ENCODE measurements at regions of chr4 and their contacts with region 1.

Region 1: GRCh38 chr4:153573881-153574802 is 108.0 kb downstream of the TMEM131L start:
- DNase-seq: peak; percentile 54 to 76
- ATAC-seq: peak; percentile 79 to 83
- H3K4me3 ChIP-seq: no peak overlapping the region
- H3K27ac ChIP-seq: peak overlapping the region; percentile 83 to 94 (median 86)
- H3K4me1 ChIP-seq: peaks cover 43 to 53% of the 10 kb centered on the region in 2 donors
- H3K27me3 ChIP-seq: no peaks in the 10 kb centered on the region
- CTCF ChIP-seq: peak; percentile 61 to 74 (median 68)
- POLR2A ChIP-seq: no peak

Region 2: GRCh38 chr4:152690706-152691651 is 883.2 kb before region 1 on chr4:
- in situ Hi-C with region 1: no loop called
- intact Hi-C with region 1: loop called (anchors 5 kb)
- DNase-seq: peak; percentile 24 to 48
- ATAC-seq: peak; percentile 93 to 97
- H3K4me3 ChIP-seq: no peak overlapping the region
- H3K27ac ChIP-seq: peak overlapping the region; percentile 64 to 89 (median 86)
- H3K4me1 ChIP-seq: peaks cover 42 to 59% of the 10 kb centered on the region in 2 donors
- H3K27me3 ChIP-seq: no peaks in the 10 kb centered on the region
- CTCF ChIP-seq: no peak
- POLR2A ChIP-seq: peak in 1 of 2 donors; percentile 20

Region 3: GRCh38 chr4:153221783-153222706 is 352.1 kb before region 1 on chr4:
- in situ Hi-C with region 1: no loop called
- intact Hi-C with region 1: loop called (anchors 10 kb)
- DNase-seq: peak; percentile 18 to 35
- ATAC-seq: peak; percentile 66 to 68
- H3K4me3 ChIP-seq: peak overlapping the region; percentile 65 to 79 (median 74)
- H3K27ac ChIP-seq: peak overlapping the region; percentile 85 to 90 (median 86)
- H3K4me1 ChIP-seq: peaks cover 8 to 12% of the 10 kb centered on the region in 2 donors
- H3K27me3 ChIP-seq: no peaks in the 10 kb centered on the region
- CTCF ChIP-seq: no peak
- POLR2A ChIP-seq: peak; percentile 19 to 23

Region 4: DNA sequence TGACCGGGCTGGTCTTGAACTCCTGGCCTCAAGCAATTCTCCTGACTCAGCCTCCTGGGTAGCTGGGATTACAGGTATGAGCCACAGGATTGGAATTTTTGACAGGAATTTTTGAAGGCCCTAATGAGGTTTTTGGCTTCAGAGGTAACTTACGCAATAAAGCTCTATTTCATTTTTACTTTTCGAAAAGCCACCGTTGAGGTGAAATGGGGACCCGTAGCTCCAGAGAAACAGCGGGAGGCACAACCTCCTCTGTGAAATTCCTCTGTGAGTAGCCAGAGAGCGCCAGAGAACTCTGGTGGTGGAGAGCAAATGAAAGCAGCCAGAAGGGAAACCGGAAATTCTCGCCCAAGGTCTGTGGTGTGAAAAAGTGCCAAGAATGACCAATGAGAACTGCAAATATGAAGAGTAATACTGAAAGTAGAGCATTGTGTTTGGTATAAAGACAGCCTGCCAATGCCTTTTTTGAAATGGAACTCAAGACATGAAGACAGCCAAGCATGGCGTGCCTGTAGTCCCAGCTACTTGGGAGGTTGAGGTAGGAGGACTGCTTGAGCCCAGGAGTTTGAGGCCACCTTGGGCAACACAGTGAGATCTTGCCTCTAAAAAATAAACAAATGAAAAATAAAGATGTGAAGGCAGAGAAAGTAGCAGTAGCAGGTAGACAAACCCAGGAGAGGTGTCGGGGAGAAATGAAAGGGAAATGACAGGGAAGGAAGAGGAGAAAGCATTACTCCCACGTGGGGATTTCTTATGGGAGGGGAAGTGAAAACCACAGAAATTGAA is 141.0 kb before region 1 on chr4:
- in situ Hi-C with region 1: loop called in 3 of 4 experiments (anchors 10 kb)
- intact Hi-C with region 1: loop called (anchors 1 kb)
- DNase-seq: peak; percentile 26 to 62
- ATAC-seq: peak; percentile 80 to 90
- H3K4me3 ChIP-seq: peak overlapping the region in 2 of 4 donors; percentile 19 to 22
- H3K27ac ChIP-seq: peak overlapping the region in 2 of 4 donors; percentile 20 to 51
- H3K4me1 ChIP-seq: peaks cover 5 to 7% of the 10 kb centered on the region in 2 donors
- H3K27me3 ChIP-seq: no peaks in the 10 kb centered on the region
- CTCF ChIP-seq: peak; percentile 60 to 70 (median 66)
- POLR2A ChIP-seq: no peak

Region 5: DNA sequence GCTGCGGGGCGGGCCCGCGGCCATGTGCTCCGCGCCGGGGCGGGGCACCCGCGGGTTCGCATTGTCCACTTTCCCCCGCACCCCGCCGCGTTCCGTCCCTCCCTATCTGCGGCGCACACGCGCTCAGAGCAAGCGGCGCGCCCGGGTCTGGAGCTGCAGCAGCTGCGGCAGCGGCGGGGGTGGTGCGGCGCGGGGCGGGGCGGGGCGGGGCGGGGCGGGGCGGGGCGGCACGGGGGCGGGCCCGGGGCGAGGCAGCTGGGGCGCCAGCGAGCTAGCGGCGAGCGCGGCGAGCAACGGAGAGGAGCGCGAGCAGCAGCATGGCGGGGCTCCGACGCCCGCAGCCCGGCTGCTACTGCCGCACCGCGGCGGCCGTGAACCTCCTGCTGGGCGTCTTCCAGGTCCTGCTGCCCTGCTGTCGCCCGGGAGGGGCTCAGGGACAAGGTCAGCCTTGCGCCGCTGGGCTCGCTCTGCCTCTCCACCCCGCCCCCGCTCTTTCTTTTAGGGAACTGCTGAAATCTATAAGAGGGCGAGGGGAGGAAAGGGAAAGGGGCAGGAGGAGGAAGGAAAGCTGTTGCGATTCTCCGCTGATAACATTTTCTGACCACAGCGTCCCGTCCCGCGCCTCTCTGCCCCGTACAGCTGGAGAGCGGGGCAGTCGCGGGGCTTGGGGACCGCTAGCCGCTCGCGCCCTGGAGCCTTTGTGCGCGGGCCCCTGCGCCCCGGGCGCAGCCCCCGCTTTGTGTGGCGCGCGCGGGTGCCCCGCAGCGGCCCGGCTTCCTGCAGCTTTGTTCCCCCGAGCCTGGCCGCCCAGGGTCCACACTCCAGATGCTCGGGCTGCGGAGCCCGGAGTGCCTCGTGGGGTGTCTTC is 107.8 kb before region 1 on chr4 and contains the start of gene TMEM131L:
- in situ Hi-C with region 1: loop called in 1 of 4 experiments (anchors 10 kb)
- intact Hi-C with region 1: loop called (anchors 1 kb)
- DNase-seq: peak; percentile 61 to 72
- ATAC-seq: peak; percentile 52 to 59
- H3K4me3 ChIP-seq: peak within 1 kb of the TSS; percentile 72 to 95 (median 86)
- H3K27ac ChIP-seq: peak within 1 kb of the TSS; percentile 88 to 98 (median 92)
- H3K4me1 ChIP-seq: peaks cover 56 to 59% of the 10 kb centered on the region in 2 donors
- H3K27me3 ChIP-seq: no peaks in the 10 kb centered on the region
- CTCF ChIP-seq: peak in 1 of 5 experiments; percentile 4
- POLR2A ChIP-seq: peak; percentile 81 to 93
- total RNA-seq, gene TMEM131L: 4.6 to 21.4 (median 9.5) TPM